GM13976 (cell line): ENCODE measurements at regions of chr4 and their contacts with region 1.

Region 1: DNA sequence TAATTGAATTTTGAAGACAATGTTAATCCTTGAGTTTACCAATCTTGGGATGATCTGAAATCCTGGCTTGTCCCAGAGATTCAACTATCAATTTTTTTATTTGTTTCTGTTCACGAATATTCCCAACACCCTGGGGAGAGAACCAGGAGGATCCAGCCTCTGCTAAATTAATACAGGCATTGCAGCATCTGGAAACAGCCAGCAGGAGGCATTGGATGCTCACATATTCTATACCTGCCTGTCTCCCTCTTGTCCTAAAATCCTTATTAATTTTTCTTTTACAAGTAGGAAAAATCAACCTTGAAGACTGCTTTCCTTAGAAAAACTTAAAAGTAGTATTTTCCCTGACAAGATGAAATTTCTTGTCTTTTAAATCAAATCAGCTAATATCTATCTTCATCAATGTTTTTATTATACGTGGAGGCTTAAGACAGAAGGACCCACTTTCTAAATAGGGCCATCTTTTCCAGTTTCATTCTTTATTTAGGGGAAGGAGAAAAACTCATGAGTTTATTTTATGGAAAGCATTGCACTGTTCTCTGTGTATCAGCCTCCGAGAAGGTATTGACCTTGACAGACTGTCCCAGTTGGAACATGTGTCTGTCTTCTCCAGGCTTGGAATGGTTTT is 102.4 kb downstream of the CLNK start:
- DNase-seq: peak; percentile 27
- CTCF ChIP-seq: peak; percentile 75

Region 2: DNA sequence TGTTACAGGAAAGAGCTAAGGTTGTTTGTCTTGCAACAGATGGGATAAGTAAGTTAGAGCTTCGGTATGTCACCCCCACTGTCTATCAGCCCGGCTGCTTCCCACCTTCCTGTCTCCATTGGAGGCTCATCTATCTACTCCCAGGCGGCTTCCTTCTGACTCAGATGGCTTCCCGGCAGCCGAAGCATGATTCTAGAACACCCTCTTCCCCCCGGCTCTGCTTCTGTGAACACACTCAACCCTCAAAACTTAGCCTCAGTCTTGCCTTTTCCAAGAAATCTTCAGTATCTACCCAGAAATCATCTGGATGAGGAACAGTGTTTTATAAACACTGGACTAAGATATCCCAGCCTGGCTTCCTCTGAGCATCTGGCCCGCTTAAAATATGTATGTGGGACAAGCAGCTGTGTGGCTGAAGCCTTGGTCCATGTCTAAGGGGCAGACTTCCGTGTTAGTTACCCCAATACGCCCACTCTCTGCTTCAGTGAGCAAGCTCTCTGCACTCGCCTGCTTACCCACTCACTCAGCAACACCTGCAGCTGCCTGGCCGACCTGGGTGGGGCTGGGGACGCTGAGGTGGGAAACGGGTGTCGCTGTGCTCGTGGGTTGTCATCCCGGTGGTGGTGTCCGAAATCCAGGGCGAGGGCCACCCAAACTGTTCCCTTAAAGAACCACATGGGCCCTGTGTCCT is 548.8 kb before region 1 on chr4:
- in situ Hi-C with region 1: no loop called
- DNase-seq: no peak
- CTCF ChIP-seq: no peak

Region 3: GRCh38 chr4:10442976-10443375 is 139.2 kb before region 1 on chr4:
- in situ Hi-C with region 1: no loop called
- DNase-seq: no peak
- CTCF ChIP-seq: no peak

Region 4: GRCh38 chr4:11720292-11720691 is 1138.1 kb after region 1 on chr4:
- in situ Hi-C with region 1: loop called (anchors 25 kb)
- DNase-seq: peak; percentile 30
- CTCF ChIP-seq: peak; percentile 10